ENCODE measurements at regions of chr7 and their contacts with region 1.

Region 1: GRCh38 chr7:122415510-122415909 is 111.0 kb upstream of the FEZF1 start:
- DNase-seq: no peak
- ATAC-seq: no peak
- H3K4me3 ChIP-seq: no peak overlapping the region
- H3K27ac ChIP-seq: no peak overlapping the region
- H3K4me1 ChIP-seq: no peaks in the 10 kb centered on the region
- H3K27me3 ChIP-seq: no peaks in the 10 kb centered on the region
- CTCF ChIP-seq: no peak

Region 2: DNA sequence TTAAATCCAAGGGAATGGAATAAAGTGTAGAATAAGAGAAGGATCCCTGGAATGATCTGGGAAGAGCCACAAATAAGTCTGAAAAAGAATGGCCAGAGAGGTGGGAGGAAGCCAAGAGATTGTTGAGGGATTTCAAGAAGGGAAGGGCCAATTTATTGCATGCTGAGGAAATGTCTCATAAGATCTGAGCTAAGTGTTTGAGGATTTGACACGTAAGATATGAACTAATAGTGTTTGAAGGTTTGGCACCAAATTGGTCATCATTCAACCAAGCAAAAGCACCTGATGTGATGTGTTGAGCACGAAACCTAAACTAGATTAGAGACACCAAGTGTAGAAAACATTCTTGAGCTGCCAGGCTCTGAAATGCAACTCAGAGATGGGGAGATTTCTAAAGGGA is 1655.5 kb before region 1 on chr7:
- CTCF ChIA-PET with region 1: no interaction called
- POLR2A ChIA-PET with region 1: no interaction called
- in situ Hi-C with region 1: no loop called
- intact Hi-C with region 1: no loop called
- DNase-seq: no peak
- ATAC-seq: no peak
- H3K4me3 ChIP-seq: no peak overlapping the region
- H3K27ac ChIP-seq: no peak overlapping the region
- H3K4me1 ChIP-seq: no peaks in the 10 kb centered on the region
- H3K27me3 ChIP-seq: no peaks in the 10 kb centered on the region
- CTCF ChIP-seq: no peak

Region 3: GRCh38 chr7:122014697-122015096 is 400.8 kb before region 1 on chr7:
- CTCF ChIA-PET with region 1: no interaction called
- POLR2A ChIA-PET with region 1: no interaction called
- in situ Hi-C with region 1: no loop called
- intact Hi-C with region 1: no loop called
- DNase-seq: no peak
- ATAC-seq: no peak
- H3K4me3 ChIP-seq: no peak overlapping the region
- H3K27ac ChIP-seq: no peak overlapping the region
- H3K4me1 ChIP-seq: no peaks in the 10 kb centered on the region
- H3K27me3 ChIP-seq: peaks cover 2% of the 10 kb centered on the region
- CTCF ChIP-seq: no peak; the same call in 1 of the 2 replicates

Region 4: DNA sequence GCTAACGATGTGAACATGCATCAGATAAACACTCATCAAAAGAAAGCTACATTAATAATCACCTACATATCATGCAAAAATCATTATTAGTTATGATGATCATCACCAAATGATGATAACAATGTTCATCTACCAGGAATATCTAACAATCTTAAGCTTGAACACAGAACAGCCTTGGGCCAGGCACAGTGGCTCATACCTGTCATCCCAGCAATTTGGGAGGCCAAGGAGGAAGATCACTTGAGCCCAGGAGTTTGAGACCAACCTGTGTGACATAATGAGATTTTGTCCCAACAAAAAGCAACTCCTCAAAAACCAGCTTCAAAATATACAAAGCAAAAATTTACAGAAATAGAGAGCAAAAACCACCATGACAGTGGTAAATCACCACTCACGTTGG is 47.1 kb after region 1 on chr7:
- CTCF ChIA-PET with region 1: interaction called, 12 read pairs
- POLR2A ChIA-PET with region 1: no interaction called
- in situ Hi-C with region 1: no loop called
- intact Hi-C with region 1: no loop called
- DNase-seq: no peak
- ATAC-seq: no peak
- H3K4me3 ChIP-seq: no peak overlapping the region
- H3K27ac ChIP-seq: no peak overlapping the region
- H3K4me1 ChIP-seq: no peaks in the 10 kb centered on the region
- H3K27me3 ChIP-seq: no peaks in the 10 kb centered on the region
- CTCF ChIP-seq: no peak